Activated CD4-positive, alpha-beta T cell treated with anti-CD3 and anti-CD28 coated beads for 36 hours (primary cell): ENCODE measurements at regions of chr17 and their contacts with region 1.

Region 1: DNA sequence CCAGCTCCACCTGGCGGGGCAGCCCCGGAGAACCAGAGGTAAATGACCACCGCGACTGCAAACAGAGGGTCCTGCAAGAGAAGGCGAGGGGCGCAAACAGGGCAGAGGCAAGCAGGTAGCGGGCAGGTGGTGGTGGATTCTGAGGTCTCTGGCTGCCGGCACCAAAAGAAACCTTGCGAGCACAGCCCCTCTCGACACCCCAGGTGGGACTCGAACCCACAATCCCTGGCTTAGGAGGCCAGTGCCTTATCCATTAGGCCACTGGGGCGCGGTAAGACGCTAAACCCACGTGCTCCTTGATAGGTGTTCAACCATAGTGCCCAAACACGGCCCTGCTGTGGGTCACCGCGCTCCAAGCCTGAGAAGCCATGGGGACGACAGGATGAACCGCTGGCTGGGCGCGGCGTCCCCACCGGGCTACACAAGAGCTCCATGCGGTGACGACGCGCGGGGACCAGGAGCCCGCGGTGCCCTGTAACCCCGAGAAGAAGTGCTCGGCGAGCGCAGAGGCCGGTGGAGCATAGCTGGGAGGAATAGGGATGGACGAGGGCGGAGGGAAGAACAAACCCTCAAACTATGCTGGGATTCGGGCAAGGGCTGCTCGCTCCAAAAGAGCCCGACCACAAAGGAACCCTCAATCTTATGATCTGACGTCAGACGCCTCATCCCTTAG is 12.4 kb downstream of the ATP5PD start:
- DNase-seq: peak; percentile 96
- ATAC-seq: peak; percentile 65
- H3K4me3 Mint-ChIP-seq: peak overlapping the region; percentile 91
- H3K27ac Mint-ChIP-seq: peak overlapping the region; percentile 96
- H3K4me1 Mint-ChIP-seq: peaks cover 49% of the 10 kb centered on the region
- H3K27me3 Mint-ChIP-seq: no peaks in the 10 kb centered on the region

Region 2: GRCh38 chr17:74815550-74816370 is 218.6 kb before region 1 on chr17:
- CTCF ChIA-PET with region 1: no interaction called
- POLR2A ChIA-PET with region 1: no interaction called
- intact Hi-C with region 1: no loop called
- DNase-seq: peak; percentile 21
- ATAC-seq: peak; percentile 47
- H3K4me3 Mint-ChIP-seq: no peak overlapping the region
- H3K27ac Mint-ChIP-seq: no peak overlapping the region
- H3K4me1 Mint-ChIP-seq: no peaks in the 10 kb centered on the region
- H3K27me3 Mint-ChIP-seq: no peaks in the 10 kb centered on the region

Region 3: DNA sequence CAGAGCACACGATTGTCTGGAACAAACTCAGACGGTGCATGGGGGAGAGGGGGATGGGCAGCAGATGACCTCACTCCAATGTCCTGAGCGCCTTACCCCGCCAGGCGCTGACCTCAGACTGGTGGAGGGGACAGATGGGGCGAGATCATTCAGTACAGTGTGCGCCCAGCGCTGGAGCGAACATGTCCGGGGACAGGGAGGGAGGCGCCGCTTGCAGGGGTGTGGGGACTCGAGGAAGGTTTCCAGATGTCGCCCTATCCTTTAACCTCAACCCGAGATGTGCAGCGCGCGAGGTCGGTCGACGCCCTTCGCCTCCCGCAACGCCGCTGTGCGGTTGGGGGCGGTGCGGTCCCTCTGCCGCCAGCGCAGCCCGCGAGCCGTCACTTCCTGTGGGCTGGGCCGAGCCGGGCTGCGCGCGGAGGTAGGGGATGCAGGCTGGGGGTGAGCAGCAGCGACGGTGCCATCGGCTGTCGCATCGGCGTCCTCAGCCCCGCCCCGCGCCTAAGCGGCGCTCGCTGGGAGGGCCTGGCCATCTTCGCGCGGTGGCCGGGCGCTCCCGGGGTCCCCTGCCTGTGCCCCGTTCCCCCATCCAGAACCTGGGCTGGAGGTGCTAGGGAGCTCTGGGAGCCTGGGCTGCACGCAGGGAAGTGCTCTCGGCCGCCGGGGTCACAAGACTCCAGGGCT is 52.3 kb before region 1 on chr17:
- CTCF ChIA-PET with region 1: interaction called, 4 read pairs
- POLR2A ChIA-PET with region 1: no interaction called
- intact Hi-C with region 1: loop called (anchors 2 to 5 kb)
- DNase-seq: peak; percentile 90
- ATAC-seq: peak; percentile 95
- H3K4me3 Mint-ChIP-seq: peak overlapping the region; percentile 77
- H3K27ac Mint-ChIP-seq: peak overlapping the region; percentile 79
- H3K4me1 Mint-ChIP-seq: peaks cover 18% of the 10 kb centered on the region
- H3K27me3 Mint-ChIP-seq: peaks cover 5% of the 10 kb centered on the region

Region 4: DNA sequence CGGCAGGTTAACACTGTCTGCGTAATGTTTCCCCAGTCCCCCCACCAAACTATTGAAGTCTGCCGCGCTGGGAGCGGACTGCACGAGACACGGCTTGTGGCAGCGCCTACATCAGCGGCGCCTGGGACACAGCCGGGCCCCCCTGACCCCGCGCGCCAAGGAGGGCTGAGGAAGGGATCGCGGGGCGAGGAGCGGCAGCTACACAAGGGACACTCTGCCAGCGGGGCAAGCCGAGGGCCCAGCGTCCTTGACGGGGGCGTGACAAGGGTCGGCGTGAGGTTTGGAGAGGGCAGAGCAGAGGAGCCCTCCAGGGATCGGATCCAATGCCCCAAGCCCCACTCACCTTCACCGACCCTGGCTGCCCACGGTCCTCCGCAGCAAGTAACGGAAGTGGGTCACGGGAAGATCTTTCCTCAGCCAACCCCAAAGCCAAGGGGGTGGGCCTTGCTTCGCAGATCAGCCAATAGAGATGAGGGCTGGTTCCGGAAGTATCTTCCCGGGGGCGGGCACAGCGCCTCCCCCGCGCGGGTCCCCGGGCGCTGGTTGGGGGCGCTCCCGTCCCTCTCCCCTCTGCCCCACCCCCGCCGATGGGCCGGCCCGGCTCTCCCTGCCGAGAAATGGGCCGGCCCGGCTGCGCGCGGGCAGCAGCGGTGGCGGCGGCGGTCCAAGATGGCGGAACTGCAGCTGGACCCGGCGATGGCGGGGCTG is 12.4 kb after region 1 on chr17 and contains the starts of genes ATP5PD and KCTD2:
- CTCF ChIA-PET with region 1: interaction called, 8 read pairs
- POLR2A ChIA-PET with region 1: interaction called, 4 read pairs
- intact Hi-C with region 1: loop called (anchors 1 kb)
- DNase-seq: peak; percentile 97
- ATAC-seq: peak; percentile 95
- H3K4me3 Mint-ChIP-seq: peak within 1 kb of the TSS; percentile 99
- H3K27ac Mint-ChIP-seq: peak within 1 kb of the TSS; percentile 94
- H3K4me1 Mint-ChIP-seq: peaks cover 37% of the 10 kb centered on the region
- H3K27me3 Mint-ChIP-seq: no peaks in the 10 kb centered on the region
- total RNA-seq, gene ATP5PD: 194 to 237 TPM
- total RNA-seq, gene KCTD2: 15.3 to 16.7 TPM

Region 5: GRCh38 chr17:75087558-75088453 is 53.4 kb after region 1 on chr17 and contains the start of gene SLC16A5:
- CTCF ChIA-PET with region 1: no interaction called
- POLR2A ChIA-PET with region 1: no interaction called
- intact Hi-C with region 1: loop called in 1 of 2 experiments (anchors 2 kb)
- DNase-seq: peak; percentile 57
- ATAC-seq: peak; percentile 55
- H3K4me3 Mint-ChIP-seq: peak within 1 kb of the TSS; percentile 71
- H3K27ac Mint-ChIP-seq: peak within 1 kb of the TSS; percentile 73
- H3K4me1 Mint-ChIP-seq: peaks cover 51% of the 10 kb centered on the region
- H3K27me3 Mint-ChIP-seq: no peaks in the 10 kb centered on the region
- total RNA-seq, gene SLC16A5: 6.0 to 6.5 TPM

Region 6: DNA sequence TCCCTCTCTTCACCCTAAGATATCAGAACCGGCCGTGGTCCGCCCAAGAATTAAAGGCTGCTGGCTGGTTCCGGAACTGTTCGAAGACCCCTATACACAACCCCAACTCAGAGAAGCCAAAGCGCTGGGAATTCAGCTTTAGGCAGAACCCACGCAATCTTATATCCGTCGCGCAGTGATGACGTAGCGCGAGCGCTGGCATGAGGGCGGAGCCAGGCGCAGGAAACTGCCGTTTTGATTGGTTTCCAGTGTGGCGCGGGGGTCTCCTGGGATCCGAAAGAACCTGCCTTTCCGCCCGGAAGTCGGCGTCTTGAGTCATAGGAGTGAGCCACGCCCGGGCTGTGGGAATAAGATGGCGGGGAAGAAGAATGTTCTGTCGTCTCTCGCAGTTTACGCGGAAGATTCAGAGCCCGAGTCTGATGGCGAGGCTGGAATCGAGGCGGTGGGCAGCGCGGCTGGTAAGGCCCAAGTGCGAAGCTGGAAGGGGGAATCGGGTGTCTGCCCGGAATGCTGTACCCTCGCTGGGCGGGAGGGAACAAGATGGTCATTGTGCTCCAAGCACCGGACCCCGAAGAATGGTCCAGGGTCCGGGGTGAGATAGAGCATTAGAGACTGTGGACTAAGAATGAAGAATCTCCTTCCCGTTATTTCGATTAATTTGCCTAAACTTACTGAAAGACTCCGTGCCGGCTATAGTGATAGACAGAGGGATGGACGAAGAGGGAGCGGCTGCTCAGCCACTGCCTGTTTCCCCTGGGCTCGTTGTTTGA is 632.8 kb after region 1 on chr17 and contains the starts of genes RECQL5 and SAP30BP:
- CTCF ChIA-PET with region 1: no interaction called
- POLR2A ChIA-PET with region 1: no interaction called
- intact Hi-C with region 1: loop called in 1 of 2 experiments (anchors 5 kb)
- DNase-seq: peak; percentile 99
- ATAC-seq: peak; percentile 100
- H3K4me3 Mint-ChIP-seq: no peak within 1 kb of the TSS
- H3K27ac Mint-ChIP-seq: no peak within 1 kb of the TSS
- H3K4me1 Mint-ChIP-seq: peaks cover 34% of the 10 kb centered on the region
- H3K27me3 Mint-ChIP-seq: no peaks in the 10 kb centered on the region
- total RNA-seq, gene RECQL5: 36.4 to 40.5 TPM
- total RNA-seq, gene SAP30BP: 87.8 to 100.0 TPM